ENCODE measurements at regions of chr6 and their contacts with region 1.

Region 1: DNA sequence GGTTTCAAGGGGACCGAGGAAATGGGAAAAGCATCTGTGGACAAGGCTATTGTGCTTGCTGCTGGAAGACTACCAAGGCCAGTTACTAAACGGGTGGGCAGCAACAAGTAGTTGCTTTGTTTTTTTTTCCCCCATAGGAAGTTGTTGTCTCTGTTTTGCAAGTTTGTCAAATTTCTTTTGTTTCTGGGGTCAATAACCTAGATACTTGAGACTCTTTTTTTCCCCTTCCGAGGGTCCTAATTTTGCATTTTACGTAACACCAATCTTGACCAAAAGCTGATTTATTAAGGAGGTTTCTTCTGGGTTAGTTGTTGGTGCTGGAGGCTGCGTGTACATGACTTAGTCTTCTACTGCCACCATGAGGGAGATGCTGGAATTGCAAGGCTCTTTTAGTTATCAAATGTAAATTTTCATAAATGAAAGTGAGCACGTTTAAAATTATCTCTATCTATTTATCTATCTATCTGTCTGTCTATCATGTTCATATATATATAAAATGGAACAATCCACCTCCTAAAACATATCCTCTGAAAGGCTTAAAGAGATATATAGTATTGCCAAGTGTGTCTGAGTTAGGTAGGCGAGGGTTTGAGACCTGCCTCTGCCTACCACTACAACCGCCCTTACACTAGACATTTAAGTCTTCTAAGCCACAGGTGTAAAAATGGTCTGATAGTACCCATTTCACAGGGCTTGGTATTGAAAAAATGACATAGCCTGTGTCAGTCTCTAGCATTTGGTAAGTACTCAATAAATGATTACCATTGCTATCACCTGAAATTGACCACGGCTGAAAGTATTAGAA is 60.2 kb downstream of the GCLC start:
- DNase-seq: no peak
- ATAC-seq: peak; percentile 59

Region 2: DNA sequence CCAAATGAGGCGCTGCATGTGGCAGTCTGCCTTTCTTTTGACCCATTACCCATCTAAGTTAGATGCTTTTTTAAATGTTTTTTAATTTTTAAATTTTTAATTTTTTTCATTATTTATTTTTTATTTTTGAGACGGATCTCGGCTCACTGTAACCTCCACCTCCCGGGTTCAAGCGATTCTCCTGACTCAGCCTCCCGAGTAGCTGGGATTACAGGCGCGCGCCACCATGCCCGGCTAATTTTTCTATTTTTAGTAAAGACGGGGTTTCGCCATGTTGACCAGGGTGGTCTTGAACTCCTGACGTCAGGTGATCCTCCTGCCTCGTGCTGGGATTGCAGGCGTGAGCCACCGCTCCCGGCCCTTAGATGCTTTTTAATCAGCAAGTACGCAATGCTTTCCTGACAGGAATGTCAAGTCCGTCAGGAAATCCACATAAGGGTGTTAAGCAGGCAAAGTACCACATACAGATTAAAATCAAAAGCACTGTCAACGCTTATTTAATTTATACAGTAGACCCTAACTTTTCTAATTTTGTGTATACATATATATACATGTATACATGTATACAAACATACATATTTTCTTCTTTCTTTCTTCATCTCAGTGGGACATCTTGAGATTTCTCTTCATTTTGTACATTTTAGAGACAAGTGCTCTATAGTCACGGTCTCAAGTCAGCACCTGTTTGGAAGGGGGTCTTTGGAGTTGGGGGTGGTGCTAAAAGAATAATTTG is 488.6 kb before region 1 on chr6:
- intact Hi-C with region 1: loop called (anchors 10 kb)
- DNase-seq: no peak
- ATAC-seq: no peak

Region 3: DNA sequence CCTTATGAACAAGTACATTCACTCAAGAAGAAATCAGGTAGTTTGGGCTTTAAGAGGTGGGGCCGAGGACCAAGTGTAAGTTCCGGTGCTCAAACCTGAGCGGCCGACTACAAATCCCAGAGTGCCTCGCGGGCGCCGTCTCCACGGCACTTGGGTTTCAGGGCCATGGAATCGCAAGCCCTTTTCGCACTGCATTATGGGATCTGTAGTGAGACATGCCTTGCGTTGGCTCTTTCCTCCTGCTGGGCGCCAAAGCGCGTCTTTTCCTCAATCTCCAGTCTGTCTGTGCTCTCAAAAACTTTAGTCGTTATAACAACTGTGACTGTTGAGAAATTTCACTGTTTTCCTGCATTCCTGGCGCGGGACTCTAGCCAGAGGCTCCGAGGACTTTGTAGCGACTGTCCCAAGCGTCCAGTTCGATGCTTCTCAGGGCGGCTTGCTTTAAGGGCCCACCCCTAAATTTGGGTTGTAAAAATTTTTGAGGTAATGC is 419.9 kb before region 1 on chr6:
- intact Hi-C with region 1: no loop called
- DNase-seq: peak; percentile 98
- ATAC-seq: peak; percentile 92

Region 4: DNA sequence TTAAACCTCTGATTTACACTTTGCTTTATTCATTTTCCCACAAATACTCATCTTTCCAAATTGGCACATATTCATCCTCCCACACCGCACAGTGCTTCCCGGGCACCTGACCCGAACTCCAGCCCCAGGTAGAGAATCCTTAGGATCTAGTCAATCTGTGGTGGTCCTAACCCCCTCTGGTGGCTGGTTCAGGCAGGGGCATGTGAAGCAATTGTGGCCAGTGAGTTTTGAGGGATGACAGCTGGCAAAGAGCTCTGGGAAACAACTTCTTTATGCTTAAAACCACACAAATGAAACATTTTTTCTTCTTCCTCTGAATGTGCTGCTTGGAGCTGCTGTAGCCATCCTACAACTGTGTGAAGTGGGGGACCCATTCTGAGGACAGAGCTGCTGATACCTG is 190.6 kb before region 1 on chr6:
- intact Hi-C with region 1: loop called (anchors 10 kb)
- DNase-seq: no peak
- ATAC-seq: no peak

Region 5: GRCh38 chr6:53359072-53359842 is 125.4 kb before region 1 on chr6:
- intact Hi-C with region 1: loop called (anchors 5 kb)
- DNase-seq: peak; percentile 98
- ATAC-seq: peak; percentile 98

Region 6: GRCh38 chr6:53410508-53411258 is 74.0 kb before region 1 on chr6:
- intact Hi-C with region 1: loop called (anchors 5 kb)
- DNase-seq: no peak
- ATAC-seq: peak; percentile 84

Region 7: DNA sequence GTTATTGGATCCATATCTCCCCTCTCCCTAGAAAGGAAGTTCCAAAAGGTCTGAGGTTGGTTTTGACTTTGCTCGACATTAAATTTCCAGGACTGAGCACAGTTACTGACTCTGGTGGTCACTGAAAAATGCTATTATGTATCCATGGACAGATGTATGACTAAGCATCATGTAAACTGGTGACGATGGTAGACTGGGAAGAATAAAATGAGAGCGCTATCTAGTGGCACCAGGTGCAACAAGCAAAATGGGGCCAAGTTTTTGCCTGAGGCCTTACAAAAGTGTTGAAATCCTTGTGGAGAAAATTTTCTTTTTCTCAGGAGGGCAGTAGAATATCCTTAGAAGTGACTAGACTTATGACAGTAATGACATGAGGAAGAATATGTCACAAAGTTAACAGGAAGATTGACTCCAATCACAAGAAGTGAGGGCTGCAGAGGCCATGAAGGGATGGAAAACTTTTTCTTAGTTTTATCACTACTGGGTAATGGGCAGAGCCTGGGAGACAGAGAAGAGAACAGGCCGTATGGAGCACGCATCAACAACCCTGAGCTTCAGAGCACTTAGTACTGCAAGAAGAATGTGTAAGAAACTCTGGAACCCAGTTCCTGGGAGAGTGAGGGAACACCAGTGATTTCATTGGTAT is 47.0 kb before region 1 on chr6:
- intact Hi-C with region 1: loop called (anchors 5 kb)
- DNase-seq: no peak
- ATAC-seq: no peak

Region 8: DNA sequence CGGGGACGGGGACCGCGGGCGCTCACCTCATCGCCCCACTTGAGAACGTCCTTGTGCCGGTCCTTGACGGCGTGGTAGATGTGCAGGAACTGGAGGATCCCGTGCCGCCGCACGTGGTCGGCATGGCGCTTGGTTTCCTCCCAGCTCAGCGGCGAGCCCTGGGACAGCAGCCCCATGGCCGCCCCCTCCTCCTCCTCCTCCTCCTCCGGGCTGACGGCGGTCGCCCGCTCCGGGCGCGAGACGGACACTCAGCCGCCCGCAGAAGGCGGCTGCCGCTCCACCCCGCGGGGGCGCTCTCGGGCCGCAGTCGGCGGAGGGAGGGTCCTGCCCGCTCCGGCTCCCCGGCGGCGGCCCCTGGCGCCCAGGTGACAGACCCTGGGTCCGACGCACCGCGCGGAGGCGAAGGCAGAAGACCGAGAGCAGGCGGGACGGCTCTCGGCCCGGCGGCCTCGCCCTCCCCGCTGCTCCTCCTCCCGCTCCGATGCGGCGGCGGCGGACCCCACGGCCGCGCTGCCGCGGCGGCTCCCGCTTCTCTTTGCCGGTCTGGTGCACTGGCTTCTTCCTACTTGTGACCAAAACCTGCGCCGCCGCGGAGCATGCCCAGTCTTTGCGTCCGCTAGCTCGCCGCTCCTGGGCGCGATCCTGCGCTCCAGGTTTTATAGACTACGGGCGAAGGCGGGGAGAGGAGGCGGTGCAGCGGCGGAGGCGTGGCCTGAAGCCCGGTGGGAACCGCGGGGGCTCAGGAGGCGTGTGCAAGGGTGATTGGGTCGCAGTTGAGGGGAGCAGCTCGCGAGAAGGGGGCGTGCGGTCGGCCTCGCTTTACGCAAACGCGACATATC is 60.0 kb after region 1 on chr6 and contains the start of gene GCLC:
- intact Hi-C with region 1: no loop called
- DNase-seq: peak; percentile 98
- ATAC-seq: peak; percentile 84
- total RNA-seq, gene GCLC: 26.7 TPM

Region 9: DNA sequence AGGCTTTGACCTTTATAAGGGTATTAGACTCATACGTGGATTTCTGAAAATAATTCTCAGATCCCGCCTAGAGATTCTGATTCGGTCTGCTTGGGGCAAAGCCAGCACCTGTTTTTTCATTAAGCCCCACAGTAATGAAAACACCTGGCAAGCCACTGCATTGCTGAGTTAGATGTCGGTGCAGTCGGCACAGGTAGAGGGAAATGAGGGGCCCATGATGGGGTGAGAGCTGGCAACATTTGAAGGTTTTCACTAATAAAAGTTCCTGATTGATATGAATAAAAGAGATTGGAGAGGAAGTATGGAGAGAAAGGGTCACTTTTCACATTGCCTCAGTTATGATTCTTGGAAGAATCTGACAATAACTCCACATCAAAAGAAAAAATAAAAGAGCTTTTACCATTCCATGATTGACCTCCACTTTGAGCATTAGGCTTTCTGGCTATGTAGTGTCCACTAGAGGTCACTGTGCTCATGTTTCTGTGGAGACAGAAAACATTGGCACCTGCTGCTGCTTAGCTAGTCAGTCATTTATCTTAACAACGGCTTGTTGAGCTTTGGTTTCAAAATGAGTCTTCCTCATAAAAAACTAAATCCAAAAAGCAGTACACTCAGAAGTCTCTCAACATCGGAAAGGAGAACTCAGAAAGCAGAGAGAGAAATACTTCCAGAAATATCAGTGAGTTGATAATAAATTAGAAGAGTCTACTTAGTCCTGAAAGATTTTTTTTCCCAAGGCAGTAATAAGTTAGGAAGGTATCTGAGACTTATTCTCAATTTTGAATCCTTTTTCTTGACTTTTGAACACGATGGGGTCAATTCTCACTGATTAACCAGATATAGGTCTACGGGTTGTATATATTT is 234.2 kb after region 1 on chr6:
- intact Hi-C with region 1: no loop called
- DNase-seq: no peak
- ATAC-seq: peak; percentile 75